ENCODE measurements at regions of chr2 and their contacts with region 1.

Region 1: DNA sequence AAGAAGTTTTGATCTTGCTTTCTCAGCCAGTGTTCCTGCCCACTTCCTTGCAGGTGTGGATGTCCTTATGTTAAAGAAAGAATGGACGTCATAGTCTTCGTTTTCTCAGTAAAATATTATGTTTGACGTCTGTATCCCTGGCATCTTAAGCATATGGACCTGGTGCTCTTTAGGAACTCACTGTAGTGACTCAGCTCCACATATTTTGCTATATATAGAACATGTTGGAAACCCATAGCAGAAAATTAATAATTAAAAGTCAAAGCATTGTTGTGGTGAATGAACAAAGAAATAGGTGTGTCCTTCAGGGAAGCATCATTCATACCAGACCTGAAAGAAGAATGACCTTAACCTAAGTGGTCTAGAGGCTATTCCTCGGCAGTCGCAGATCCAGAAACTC is 196.1 kb downstream of the MCFD2 start:
- DNase-seq: peak; percentile 59
- H3K4me3 ChIP-seq: no peak overlapping the region
- CTCF ChIP-seq: no peak

Region 2: GRCh38 chr2:46117379-46117778 is 602.1 kb before region 1 on chr2:
- CTCF ChIA-PET with region 1: no interaction called
- POLR2A ChIA-PET with region 1: no interaction called
- DNase-seq: no peak
- H3K4me3 ChIP-seq: no peak overlapping the region
- CTCF ChIP-seq: no peak

Region 3: DNA sequence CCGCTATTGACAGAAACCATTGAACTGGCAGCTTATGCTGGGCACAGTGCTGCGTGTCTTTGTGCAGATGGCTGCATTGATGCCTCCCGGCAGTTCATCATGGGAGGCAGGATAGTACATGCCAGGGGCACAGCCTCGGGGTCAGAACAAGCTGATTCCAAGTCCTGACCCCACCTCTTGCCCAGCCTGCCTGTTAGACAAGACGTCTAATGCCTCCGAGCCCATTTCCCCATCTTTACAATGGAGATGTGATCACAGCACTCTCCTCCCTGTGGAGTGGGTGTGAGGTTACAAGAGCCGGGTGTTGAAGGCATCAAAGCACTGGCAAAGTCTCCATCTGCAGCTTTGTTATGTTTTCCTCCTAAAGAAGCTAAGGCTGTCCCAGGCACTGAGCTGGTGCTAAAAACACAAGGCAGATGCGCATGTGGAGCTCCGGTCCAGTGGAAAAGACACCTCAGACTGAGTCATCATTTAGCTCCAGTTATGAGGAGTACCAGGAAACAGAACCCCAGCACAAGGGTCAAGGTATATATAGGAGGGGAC is 548.0 kb before region 1 on chr2:
- CTCF ChIA-PET with region 1: no interaction called
- POLR2A ChIA-PET with region 1: no interaction called
- DNase-seq: peak; percentile 49
- H3K4me3 ChIP-seq: no peak overlapping the region
- CTCF ChIP-seq: no peak

Region 4: GRCh38 chr2:46657042-46657504 is 62.4 kb before region 1 on chr2:
- CTCF ChIA-PET with region 1: interaction called, 11 read pairs
- POLR2A ChIA-PET with region 1: no interaction called
- DNase-seq: no peak
- H3K4me3 ChIP-seq: no peak overlapping the region
- CTCF ChIP-seq: peak; percentile 8

Region 5: DNA sequence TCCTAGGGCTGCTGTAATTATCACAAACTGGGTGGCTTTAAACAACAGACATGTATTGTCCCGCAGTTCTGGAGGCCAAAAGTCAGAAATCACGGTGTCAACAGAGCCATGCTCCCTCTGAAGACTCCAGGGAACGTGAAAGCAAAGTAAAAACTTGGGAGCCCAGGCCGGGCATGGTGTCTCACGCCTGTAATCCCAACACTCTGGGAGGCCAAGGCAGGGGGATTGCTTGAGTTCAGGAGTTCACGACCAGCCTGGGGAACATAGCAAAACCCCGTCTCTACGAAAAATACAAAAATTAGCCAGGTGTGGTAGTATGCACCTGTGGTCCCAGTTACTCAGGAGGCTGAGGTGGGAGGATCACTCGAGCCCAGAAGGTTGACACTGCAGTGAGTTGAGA is 132.6 kb after region 1 on chr2:
- CTCF ChIA-PET with region 1: no interaction called
- POLR2A ChIA-PET with region 1: no interaction called
- DNase-seq: no peak
- H3K4me3 ChIP-seq: no peak overlapping the region
- CTCF ChIP-seq: no peak

Measured in AG04449 (cell line).